HEK293 (cell line): ENCODE measurements at regions of chr19 and their contacts with region 1.

Region 1: DNA sequence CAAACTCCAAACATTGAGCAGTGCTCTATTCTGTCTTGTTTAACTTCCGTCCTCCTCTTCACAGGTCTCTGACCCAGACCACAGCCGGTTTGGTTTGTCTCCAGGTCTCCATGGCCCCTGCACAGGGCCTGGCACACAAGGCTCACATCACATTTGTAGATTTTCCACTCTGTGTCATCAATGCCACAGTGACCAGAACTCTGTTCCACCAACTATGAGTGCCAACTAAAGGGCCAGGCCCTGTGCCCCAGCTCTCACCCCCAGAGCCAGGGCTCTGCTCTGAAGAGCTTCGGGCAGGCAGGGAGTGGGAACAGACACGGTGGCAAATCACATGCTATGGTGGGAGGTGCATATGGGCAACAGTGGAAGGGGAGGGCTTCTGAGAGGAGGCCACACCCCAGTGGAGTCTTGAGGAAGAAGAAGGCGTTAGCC is 16.0 kb downstream of the SMG9 start:
- H3K4me3 ChIP-seq: no peak overlapping the region
- H3K27ac ChIP-seq: no peak overlapping the region
- H3K4me1 ChIP-seq: no peaks in the 10 kb centered on the region
- CTCF ChIP-seq: no peak

Region 2: GRCh38 chr19:43678512-43679261 is 60.1 kb before region 1 on chr19:
- CTCF ChIA-PET with region 1: no interaction called
- POLR2A ChIA-PET with region 1: no interaction called
- H3K4me3 ChIP-seq: no peak overlapping the region
- H3K27ac ChIP-seq: no peak overlapping the region
- H3K4me1 ChIP-seq: peaks cover 13% of the 10 kb centered on the region
- CTCF ChIP-seq: no peak

Region 3: DNA sequence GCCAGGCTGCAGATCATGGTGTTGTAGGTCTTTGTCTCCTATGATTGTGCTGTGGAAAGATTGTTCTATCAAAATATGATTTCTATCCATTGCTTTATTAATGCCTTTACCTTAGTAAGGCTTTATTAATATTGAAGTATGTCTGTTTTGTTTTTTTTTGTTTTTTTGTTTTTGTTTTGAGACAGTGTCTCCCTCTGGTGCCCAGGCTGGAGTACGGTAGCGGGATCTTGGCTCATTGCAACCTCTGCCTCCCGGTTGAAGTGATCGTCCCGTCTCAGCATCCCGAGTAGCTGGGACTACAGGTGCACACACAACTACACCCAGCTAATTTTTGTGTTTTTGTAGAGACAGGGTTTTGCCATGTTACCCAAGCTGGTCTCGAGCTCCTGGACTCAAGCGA is 15.2 kb before region 1 on chr19:
- CTCF ChIA-PET with region 1: interaction called, 36 read pairs
- POLR2A ChIA-PET with region 1: interaction called, 3 read pairs
- H3K4me3 ChIP-seq: no peak overlapping the region
- H3K27ac ChIP-seq: no peak overlapping the region
- H3K4me1 ChIP-seq: no peaks in the 10 kb centered on the region
- CTCF ChIP-seq: peak; percentile 53

Region 4: DNA sequence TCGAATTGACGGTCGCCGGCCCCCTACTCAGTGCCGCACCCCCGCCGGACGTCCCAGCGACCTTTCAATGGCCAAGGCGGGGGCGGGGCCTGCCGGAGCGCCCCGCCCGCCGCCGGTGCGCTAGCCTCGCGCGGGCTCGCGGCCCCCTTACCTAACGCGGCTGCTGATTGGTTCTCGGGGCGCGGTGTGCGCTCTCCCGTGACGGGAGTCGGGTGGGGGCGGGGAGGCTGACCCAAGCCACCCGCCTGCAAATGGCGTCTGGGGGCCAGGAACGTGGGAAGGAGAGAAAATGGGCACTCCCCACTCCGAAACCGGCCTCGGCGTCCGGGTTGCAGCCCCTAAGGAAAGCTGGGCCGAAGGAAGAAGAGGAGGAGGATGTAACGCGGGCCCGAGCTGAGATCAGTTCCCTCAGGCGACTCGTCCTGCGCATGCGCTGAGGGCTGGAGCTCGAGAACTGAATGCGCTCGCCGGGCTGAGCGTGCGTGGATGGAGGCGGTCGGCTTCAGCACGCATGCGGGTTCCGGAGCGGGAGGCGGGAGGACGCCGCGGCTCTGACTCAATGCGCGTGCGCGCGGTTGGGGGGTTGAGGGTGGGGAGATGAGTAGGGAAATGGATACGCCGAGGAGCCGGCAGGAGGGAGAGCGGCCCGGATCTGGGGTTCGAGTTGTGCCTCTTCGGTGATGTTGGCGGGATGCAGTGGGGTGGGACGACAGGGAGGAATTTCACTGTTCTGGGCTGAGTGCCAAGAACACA is 15.9 kb after region 1 on chr19 and contains the start of gene SMG9:
- CTCF ChIA-PET with region 1: interaction called, 68 read pairs
- POLR2A ChIA-PET with region 1: interaction called, 7 read pairs
- H3K4me3 ChIP-seq: peak within 1 kb of the TSS; percentile 60
- H3K27ac ChIP-seq: peak within 1 kb of the TSS; percentile 100
- H3K4me1 ChIP-seq: peaks cover 32% of the 10 kb centered on the region
- CTCF ChIP-seq: no peak; the same call in 1 of the 2 replicates

Region 5: DNA sequence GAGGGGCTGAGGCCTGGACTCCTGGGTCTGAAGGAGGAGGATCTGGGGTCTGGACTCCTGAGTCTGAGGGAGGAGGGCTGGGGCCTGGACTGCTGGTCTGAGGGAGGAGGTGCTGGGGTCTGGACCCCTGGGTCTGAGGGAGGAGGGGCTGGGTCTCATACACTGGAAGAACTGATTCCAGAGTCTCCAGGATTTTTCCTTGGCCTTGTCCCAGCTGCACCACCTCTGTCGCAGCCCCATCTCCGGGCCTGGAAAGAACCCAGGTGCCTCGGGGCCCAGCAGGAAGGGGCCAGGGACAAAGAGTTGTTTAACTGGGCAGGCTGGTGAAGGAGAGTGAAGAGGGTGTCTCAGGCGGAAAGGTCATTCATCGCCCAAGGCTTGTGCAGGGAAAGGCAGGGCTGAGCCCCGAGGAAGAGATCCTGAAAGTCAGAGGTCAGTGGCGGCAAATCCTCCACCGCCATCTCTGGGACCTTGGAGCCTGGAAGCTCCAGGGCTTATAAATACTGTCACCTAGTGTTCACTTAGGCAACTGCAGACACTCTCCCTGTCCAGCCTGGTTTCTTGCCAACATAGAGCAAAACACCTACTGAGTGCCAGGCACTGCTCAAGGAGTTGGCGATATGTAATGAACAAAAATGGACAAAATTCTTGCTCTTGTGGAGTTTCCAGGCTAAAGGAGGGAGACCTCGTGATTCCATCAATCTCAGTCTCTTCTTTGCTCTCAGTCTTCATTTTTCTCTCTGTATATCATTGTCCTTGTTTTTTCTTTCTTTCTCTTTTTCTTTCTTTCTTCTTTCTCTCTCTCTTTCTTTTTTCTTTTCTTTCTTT is 46.4 kb after region 1 on chr19:
- CTCF ChIA-PET with region 1: interaction called, 203 read pairs
- POLR2A ChIA-PET with region 1: no interaction called
- H3K4me3 ChIP-seq: no peak overlapping the region
- H3K27ac ChIP-seq: no peak overlapping the region
- H3K4me1 ChIP-seq: no peaks in the 10 kb centered on the region; the same call in 1 of the 2 replicates
- CTCF ChIP-seq: peak; percentile 99

Region 6: GRCh38 chr19:44051654-44052402 is 313.0 kb after region 1 on chr19 and contains the start of gene ZNF223:
- CTCF ChIA-PET with region 1: no interaction called
- POLR2A ChIA-PET with region 1: no interaction called
- H3K4me3 ChIP-seq: peak within 1 kb of the TSS; percentile 66
- H3K27ac ChIP-seq: peak within 1 kb of the TSS; percentile 61
- H3K4me1 ChIP-seq: peaks cover 14% of the 10 kb centered on the region
- CTCF ChIP-seq: no peak; the same call in 1 of the 2 replicates